Calu3 (cell line): ENCODE measurements at regions of chr4 and their contacts with region 1.

Region 1: DNA sequence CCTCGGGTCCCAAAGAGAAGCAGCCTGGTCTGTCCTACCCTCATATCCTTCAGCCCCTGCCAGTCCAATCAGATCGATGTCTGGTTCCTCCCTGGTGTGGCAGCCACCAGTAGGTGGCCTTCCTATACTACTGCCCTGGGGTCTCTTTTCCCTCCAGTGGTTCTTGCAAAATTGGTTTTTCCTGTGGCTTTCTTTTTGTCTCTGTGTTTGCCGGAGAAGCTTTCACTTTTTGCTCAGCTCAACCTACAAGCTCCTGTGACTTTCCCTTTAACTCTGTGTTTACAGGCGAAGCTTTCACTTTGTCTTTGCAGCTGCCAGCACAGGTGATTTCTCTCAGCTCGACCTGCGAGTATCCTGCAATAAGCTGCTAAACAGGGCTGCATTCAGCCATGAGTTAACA is 46.8 kb downstream of the UGT2A3 start:
- DNase-seq: peak; percentile 41
- H3K4me3 Mint-ChIP-seq: peak overlapping the region; percentile 84
- H3K27ac Mint-ChIP-seq: peak overlapping the region; percentile 97
- H3K4me1 Mint-ChIP-seq: peaks cover 38% of the 10 kb centered on the region
- H3K27me3 Mint-ChIP-seq: no peaks in the 10 kb centered on the region
- CTCF ChIP-seq: peak; percentile 25

Region 2: GRCh38 chr4:68617003-68617698 is 287.6 kb before region 1 on chr4:
- CTCF ChIA-PET with region 1: no interaction called
- intact Hi-C with region 1: no loop called
- DNase-seq: no peak
- H3K4me3 Mint-ChIP-seq: no peak overlapping the region
- H3K27ac Mint-ChIP-seq: no peak overlapping the region
- H3K4me1 Mint-ChIP-seq: no peaks in the 10 kb centered on the region
- H3K27me3 Mint-ChIP-seq: no peaks in the 10 kb centered on the region
- CTCF ChIP-seq: no peak

Region 3: GRCh38 chr4:68745472-68745812 is 159.3 kb before region 1 on chr4:
- CTCF ChIA-PET with region 1: no interaction called
- intact Hi-C with region 1: loop called (anchors 2 kb)
- DNase-seq: no peak
- H3K4me3 Mint-ChIP-seq: no peak overlapping the region
- H3K27ac Mint-ChIP-seq: peak overlapping the region; percentile 81
- H3K4me1 Mint-ChIP-seq: peaks cover 37% of the 10 kb centered on the region
- H3K27me3 Mint-ChIP-seq: no peaks in the 10 kb centered on the region
- CTCF ChIP-seq: no peak

Region 4: GRCh38 chr4:68951078-68951805 is 46.5 kb after region 1 on chr4 and contains the start of gene UGT2A3:
- CTCF ChIA-PET with region 1: no interaction called
- intact Hi-C with region 1: loop called (anchors 5 kb)
- DNase-seq: peak; percentile 49
- H3K4me3 Mint-ChIP-seq: peak within 1 kb of the TSS; percentile 50
- H3K27ac Mint-ChIP-seq: peak within 1 kb of the TSS; percentile 73
- H3K4me1 Mint-ChIP-seq: peaks cover 41% of the 10 kb centered on the region
- H3K27me3 Mint-ChIP-seq: no peaks in the 10 kb centered on the region
- CTCF ChIP-seq: no peak
- total RNA-seq, gene UGT2A3: 2.9 and 5.2 TPM in 2 replicates

Region 5: GRCh38 chr4:69057620-69058409 is 153.0 kb after region 1 on chr4:
- CTCF ChIA-PET with region 1: no interaction called
- intact Hi-C with region 1: loop called (anchors 2 kb)
- DNase-seq: peak; percentile 52
- H3K4me3 Mint-ChIP-seq: peak overlapping the region; percentile 24
- H3K27ac Mint-ChIP-seq: peak overlapping the region; percentile 90
- H3K4me1 Mint-ChIP-seq: peaks cover 24% of the 10 kb centered on the region
- H3K27me3 Mint-ChIP-seq: no peaks in the 10 kb centered on the region
- CTCF ChIP-seq: no peak

Region 6: DNA sequence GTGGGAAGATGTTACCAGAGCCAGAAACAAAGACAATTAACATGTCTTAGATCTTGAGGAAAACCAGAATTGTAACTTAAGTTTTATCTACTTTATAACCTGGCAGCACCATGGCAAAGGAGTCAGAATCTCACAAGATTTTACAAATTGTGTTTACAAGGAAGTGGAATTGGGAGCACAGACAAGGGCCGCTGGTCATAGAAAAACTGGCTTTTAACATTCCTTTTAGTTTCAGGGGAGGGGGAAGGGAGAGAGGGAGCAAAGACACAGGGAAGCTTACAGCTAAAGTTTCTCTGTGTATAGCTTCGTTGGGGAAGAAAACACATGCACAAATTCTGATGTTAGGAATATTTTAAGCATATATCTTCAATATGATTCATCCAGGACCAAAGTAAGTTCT is 320.1 kb after region 1 on chr4:
- CTCF ChIA-PET with region 1: no interaction called
- intact Hi-C with region 1: no loop called
- DNase-seq: no peak
- H3K4me3 Mint-ChIP-seq: no peak overlapping the region
- H3K27ac Mint-ChIP-seq: no peak overlapping the region
- H3K4me1 Mint-ChIP-seq: no peaks in the 10 kb centered on the region
- H3K27me3 Mint-ChIP-seq: no peaks in the 10 kb centered on the region
- CTCF ChIP-seq: no peak